CD4-positive, alpha-beta memory T cell (primary cell): ENCODE measurements at regions of chr19 and their contacts with region 1.

Region 1: GRCh38 chr19:17989425-17990094 is 18.4 kb upstream of the ARRDC2 start:
- DNase-seq: no peak
- H3K4me3 ChIP-seq: no peak overlapping the region
- H3K4me3 Mint-ChIP-seq: no peak overlapping the region
- H3K27ac ChIP-seq: no peak overlapping the region
- H3K27ac Mint-ChIP-seq: no peak overlapping the region
- H3K4me1 ChIP-seq: no peaks in the 10 kb centered on the region
- H3K4me1 Mint-ChIP-seq: no peaks in the 10 kb centered on the region
- H3K27me3 ChIP-seq: no peaks in the 10 kb centered on the region
- H3K27me3 Mint-ChIP-seq: peaks cover 4 to 6% of the 10 kb centered on the region in 2 donors

Region 2: DNA sequence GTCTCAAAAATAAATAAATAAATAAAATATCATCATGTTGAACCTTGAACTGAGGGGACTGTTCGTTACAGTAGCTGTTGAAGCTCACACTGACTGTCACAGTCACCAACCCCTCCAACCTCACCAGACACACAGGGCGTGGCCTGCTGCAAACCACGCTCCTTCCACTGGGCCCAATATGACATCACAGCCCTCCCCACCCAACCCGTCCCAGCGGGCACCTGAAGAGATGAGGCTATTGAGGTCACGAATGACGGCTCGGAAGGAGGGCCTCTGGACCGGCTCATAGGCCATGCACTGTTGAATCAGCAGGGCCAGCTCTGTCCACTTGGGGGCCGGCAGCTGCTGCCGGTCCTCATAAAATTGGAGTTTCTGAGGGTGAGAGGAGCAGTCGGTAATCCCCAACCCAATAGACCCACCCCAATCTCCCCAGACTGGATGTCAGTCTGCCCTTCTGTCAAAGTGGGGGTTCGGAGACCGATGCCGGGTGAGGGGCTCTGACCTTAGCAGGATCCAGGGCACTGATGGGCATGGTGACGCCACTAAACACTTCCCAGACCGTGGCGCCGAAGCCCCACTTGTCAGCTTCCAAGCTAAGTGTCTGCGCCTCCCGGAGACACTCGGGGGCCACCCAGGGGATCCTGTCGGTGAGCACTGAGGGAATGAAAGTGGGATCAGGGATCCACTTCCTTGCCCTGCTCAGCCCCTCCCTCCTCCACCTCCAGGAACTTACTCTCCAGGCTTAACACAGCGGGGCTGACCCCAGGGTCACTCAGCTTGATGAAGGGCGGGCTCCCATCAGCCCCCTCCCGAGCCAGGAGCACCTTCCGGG is 155.0 kb before region 1 on chr19:
- CTCF ChIA-PET with region 1: no interaction called
- POLR2A ChIA-PET with region 1: no interaction called
- intact Hi-C with region 1: no loop called
- DNase-seq: peak in 1 of 5 donors; percentile 42
- H3K4me3 ChIP-seq: no peak overlapping the region
- H3K4me3 Mint-ChIP-seq: no peak overlapping the region
- H3K27ac ChIP-seq: no peak overlapping the region
- H3K27ac Mint-ChIP-seq: peak overlapping the region in 3 of 7 donors; percentile 39 to 88 (median 46)
- H3K4me1 ChIP-seq: no peaks in the 10 kb centered on the region
- H3K4me1 Mint-ChIP-seq: peaks cover 6 to 19% (median 15%) of the 10 kb centered on the region in 4 donors
- H3K27me3 ChIP-seq: no peaks in the 10 kb centered on the region
- H3K27me3 Mint-ChIP-seq: no peaks in the 10 kb centered on the region

Region 3: GRCh38 chr19:17926044-17926443 is 63.5 kb before region 1 on chr19:
- CTCF ChIA-PET with region 1: no interaction called
- POLR2A ChIA-PET with region 1: no interaction called
- intact Hi-C with region 1: no loop called
- DNase-seq: no peak
- H3K4me3 ChIP-seq: no peak overlapping the region
- H3K4me3 Mint-ChIP-seq: no peak overlapping the region
- H3K27ac ChIP-seq: no peak overlapping the region
- H3K27ac Mint-ChIP-seq: no peak overlapping the region
- H3K4me1 ChIP-seq: no peaks in the 10 kb centered on the region
- H3K4me1 Mint-ChIP-seq: no peaks in the 10 kb centered on the region
- H3K27me3 ChIP-seq: no peaks in the 10 kb centered on the region
- H3K27me3 Mint-ChIP-seq: no peaks in the 10 kb centered on the region

Region 4: DNA sequence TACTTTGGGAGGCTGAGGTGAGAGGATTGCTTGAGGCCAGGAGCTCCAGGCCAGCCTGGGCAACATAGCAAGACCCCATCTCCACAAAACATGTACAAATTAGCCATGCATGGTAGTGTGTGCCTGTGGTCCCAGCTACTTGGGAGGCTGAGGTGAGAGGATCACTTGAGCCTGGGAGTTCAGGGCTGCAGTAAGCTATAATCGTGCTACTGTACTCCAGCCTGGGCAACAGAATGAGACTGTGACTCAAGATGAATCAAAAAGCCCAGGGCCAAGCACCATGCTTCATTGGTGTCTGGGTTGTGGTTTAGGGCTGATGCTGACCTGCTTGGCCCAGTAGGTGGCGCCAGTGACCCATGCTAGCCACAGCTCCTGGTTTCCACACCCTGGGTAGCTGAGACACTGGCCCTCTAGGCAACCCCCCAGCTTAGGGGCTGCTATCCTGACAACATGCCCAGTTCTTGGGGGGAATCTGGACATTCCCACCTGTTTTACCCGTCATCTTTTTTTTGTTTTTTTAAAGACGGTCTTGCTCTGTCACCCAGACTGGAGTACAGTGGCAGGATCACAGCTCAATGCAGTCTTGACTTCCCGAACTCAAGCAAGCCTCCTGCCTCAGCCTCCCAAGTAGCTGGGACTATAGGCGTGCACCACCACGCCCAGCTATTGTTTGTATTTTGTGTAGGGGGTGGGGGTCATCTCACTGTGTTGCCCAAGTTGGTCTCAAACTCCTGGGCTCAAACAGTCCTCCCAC is 51.3 kb before region 1 on chr19:
- CTCF ChIA-PET with region 1: interaction called, 402 read pairs
- POLR2A ChIA-PET with region 1: interaction called, 3 read pairs
- intact Hi-C with region 1: no loop called
- DNase-seq: peak; percentile 77 to 82 (median 80)
- H3K4me3 ChIP-seq: no peak overlapping the region
- H3K4me3 Mint-ChIP-seq: no peak overlapping the region
- H3K27ac ChIP-seq: no peak overlapping the region
- H3K27ac Mint-ChIP-seq: peak overlapping the region in 1 of 7 donors; percentile 52
- H3K4me1 ChIP-seq: peaks cover 7% of the 10 kb centered on the region
- H3K4me1 Mint-ChIP-seq: peaks cover 4 to 10% (median 7%) of the 10 kb centered on the region in 4 donors
- H3K27me3 ChIP-seq: no peaks in the 10 kb centered on the region
- H3K27me3 Mint-ChIP-seq: no peaks in the 10 kb centered on the region